Dorsolateral prefrontal cortex (tissue), 120 donors: ENCODE measurements at regions of chr16 and their contacts with region 1.

Region 1: GRCh38 chr16:2586241-2586640 is 48.4 kb downstream of the PDPK1 start:
- DNase-seq: peak in 3 of 10 donors; percentile 11 to 31 (median 16)
- H3K4me3 ChIP-seq: no peak overlapping the region
- H3K27ac ChIP-seq: peak overlapping the region in 49 of 59 donors; percentile 5 to 85 (median 68)
- H3K27me3 ChIP-seq: no peaks in the 10 kb centered on the region
- CTCF ChIP-seq: peak in 1 of 56 donors; percentile 8

Region 2: GRCh38 chr16:2520092-2520783 is 66.0 kb before region 1 on chr16 and contains the start of gene AMDHD2:
- intact Hi-C with region 1: loop called in 1 of 2 experiments (anchors 10 kb)
- DNase-seq: peak; percentile 76 to 92 (median 86)
- H3K4me3 ChIP-seq: peak within 1 kb of the TSS; percentile 41 to 80 (median 66)
- H3K27ac ChIP-seq: peak within 1 kb of the TSS in 58 of 59 donors; percentile 20 to 92 (median 83)
- H3K27me3 ChIP-seq: no peaks in the 10 kb centered on the region
- CTCF ChIP-seq: peak in 4 of 56 donors; percentile 8 to 26 (median 8)
- total RNA-seq, gene AMDHD2: 26.9 to 73.4 (median 42.9) TPM

Region 3: DNA sequence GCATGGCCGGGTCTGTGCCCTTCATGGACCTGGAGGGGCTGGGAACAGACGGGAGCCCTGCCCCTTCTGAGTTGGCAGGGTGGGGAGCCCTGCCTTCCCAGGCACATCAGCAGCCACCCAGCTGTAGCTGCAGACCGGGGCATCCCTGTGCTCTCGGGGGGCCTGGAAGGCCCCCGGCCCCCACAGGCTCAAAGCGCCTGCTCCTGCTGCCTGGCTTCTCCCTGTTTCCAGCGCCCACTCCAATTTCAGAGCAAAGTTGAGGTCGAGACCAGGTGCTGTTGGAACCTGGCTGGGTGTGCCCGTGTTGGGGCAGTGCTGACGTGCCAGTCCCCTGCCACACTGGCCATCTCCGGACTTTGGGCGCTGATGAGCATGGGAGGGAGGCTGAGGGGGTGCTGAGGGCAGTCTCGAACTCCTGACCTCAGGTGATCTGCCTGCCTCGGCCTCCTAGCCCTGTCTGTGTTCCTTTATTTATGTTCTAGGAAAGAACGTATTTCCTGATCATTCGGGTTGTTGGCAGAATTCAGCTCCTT is 138.6 kb after region 1 on chr16:
- intact Hi-C with region 1: no loop called
- DNase-seq: no peak
- H3K4me3 ChIP-seq: no peak overlapping the region
- H3K27ac ChIP-seq: no peak overlapping the region
- H3K27me3 ChIP-seq: no peaks in the 10 kb centered on the region
- CTCF ChIP-seq: no peak

Region 4: DNA sequence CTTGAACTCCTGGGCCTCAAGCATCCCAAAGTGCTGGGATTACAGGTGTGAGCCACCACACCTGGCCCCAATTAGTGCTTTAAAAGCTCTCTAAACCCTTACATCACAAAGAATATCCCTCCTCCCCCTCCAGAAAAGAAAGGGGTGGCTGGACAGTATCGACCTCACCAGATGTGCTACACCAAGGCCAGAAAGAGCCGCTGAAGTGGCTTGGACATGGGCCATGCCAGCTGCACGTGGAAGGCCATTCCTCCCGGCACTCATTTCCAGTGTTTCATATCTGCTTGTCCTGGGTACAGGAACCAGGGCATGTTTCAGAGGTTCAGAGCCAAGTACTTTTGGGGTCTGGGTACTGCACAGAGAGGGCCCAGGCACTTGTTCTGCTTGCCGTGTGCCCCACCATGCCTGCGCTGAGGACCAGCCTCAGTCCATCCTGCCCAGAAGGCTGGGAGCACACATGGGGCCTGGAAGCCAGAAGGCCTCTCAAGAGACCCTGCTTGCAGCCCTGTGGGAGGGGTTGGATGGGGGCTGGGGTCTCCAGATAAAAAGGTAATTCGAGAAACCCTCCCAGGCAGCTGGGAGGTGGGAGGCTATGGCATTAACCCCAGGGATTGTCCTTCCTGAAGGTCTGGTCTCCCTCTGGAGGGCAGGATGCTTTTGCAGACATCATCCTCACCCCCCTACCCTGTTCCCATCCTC is 162.7 kb after region 1 on chr16:
- intact Hi-C with region 1: no loop called
- DNase-seq: no peak
- H3K4me3 ChIP-seq: no peak overlapping the region
- H3K27ac ChIP-seq: no peak overlapping the region
- H3K27me3 ChIP-seq: no peaks in the 10 kb centered on the region
- CTCF ChIP-seq: no peak